ENCODE measurements at regions of chr4 and their contacts with region 1.

Region 1: GRCh38 chr4:153750197-153750817 is 9.5 kb downstream of the RNF175 start:
- DNase-seq: peak; percentile 51
- H3K4me3 Mint-ChIP-seq: no peak overlapping the region
- H3K27ac Mint-ChIP-seq: no peak overlapping the region
- H3K4me1 Mint-ChIP-seq: peaks cover 3% of the 10 kb centered on the region
- H3K27me3 Mint-ChIP-seq: peaks cover 43% of the 10 kb centered on the region

Region 2: DNA sequence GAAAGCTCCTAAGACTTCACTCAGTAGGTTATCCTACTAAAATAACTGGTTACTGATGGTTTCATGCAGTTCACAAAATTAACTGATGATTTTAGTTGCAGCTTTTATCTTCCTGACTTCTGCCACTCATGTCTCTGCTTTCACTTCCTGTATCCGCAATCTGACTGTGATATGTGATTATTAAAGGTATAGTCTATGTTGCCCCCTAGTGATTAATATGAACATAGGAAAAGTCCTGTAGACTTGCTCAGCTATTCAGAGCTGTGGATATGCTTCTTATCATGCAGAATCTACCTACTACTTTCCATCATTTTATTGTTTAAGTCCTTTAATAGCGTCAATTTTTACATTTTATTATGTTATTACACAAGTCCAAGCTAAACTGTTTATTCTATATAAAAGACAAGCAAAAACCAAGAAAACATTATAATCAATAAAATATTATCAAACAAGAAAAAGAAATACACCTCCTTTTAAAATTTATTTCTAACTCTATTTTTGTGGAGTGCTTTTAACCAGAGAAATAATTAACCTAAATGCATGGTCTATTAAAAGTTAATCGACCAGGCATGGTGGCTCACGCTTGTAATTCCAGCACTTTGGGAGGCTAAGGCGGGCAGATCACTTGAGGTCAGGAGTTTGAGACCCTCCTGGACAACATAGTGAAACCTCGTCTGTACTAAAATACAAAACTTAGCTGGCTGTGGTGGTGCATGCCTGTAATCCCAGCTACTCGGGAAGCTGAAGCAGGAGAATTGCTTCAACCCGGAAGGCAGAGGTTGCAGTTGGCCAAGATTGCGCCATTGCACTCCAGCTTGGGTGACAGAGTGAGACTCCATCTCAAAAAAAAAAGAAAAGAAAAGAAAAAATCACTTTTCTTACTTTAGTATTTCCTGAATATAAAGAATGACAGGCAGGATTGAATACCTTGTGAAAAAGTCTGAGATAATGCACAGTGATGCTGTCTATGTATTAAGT is 106.6 kb before region 1 on chr4:
- intact Hi-C with region 1: loop called (anchors 2 kb)
- DNase-seq: no peak
- H3K4me3 Mint-ChIP-seq: no peak overlapping the region
- H3K27ac Mint-ChIP-seq: no peak overlapping the region
- H3K4me1 Mint-ChIP-seq: peaks cover 20% of the 10 kb centered on the region
- H3K27me3 Mint-ChIP-seq: no peaks in the 10 kb centered on the region

Region 3: GRCh38 chr4:154004507-154005170 is 254.3 kb after region 1 on chr4:
- intact Hi-C with region 1: no loop called
- DNase-seq: no peak
- H3K4me3 Mint-ChIP-seq: no peak overlapping the region
- H3K27ac Mint-ChIP-seq: no peak overlapping the region
- H3K4me1 Mint-ChIP-seq: no peaks in the 10 kb centered on the region
- H3K27me3 Mint-ChIP-seq: no peaks in the 10 kb centered on the region

Measured in activated T-helper 2 cell treated with anti-CD3 and anti-CD28 coated beads, Interferon-gamma antibody, Interleukin-2, Interleukin-4, amounts not matched to agents 10 μg/mL and 5 μg/mL and 100 μg/mL, durations not matched to agents 14 hours and 24 hours and 36 hours (primary cell).